ENCODE measurements at regions of chr7 and their contacts with region 1.

Region 1: DNA sequence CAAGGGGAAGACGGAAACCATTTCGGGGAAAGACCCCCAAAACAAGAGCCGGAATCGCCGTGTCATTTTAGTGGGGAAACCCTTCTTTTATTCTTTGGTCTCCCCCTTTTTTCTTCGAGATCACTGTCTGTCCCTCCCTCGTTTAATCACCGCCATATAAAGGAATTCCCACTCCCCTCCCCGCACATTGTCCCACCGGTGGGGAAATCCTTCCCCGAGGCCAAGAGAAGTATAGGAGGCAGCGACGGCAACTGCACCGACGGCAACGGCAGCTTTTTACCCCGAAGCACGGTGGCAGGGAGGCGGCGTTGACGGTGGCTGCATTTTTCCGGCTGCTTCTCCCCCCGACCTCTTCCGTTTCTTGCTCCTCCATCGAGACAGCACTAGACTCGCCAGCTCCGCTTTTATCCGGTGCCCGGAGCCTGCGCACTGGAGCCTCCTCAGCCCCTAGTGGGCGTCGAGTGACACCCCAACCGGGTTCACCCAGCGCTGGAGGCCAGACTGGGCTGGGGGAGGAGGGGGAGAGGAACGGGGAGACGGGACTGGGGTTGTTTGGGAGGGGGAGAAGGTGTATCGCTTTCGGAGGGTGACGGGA is 687 bp upstream of the KMT2E start:
- DNase-seq: peak; percentile 66
- ATAC-seq: peak; percentile 62
- H3K4me3 ChIP-seq: peak overlapping the region; percentile 100
- H3K27ac ChIP-seq: peak overlapping the region; percentile 100
- H3K4me1 ChIP-seq: peaks cover 4% of the 10 kb centered on the region
- H3K27me3 ChIP-seq: no peaks in the 10 kb centered on the region
- CTCF ChIP-seq: peak; percentile 45 to 69 (median 67)
- EP300 ChIP-seq: no peak; a peak in 1 of 4 replicates
- POLR2A ChIP-seq: peak; percentile 85
- RAD21 ChIP-seq: peak; percentile 8; the same call in 1 of the 2 replicates

Region 2: GRCh38 chr7:104943502-104944343 is 69.6 kb before region 1 on chr7:
- CTCF ChIA-PET with region 1: interaction called, 3 read pairs
- POLR2A ChIA-PET with region 1: interaction called, 8 read pairs
- RAD21 ChIA-PET with region 1: interaction called, 9 read pairs
- SMC1A ChIA-PET with region 1: interaction called, 13 read pairs
- in situ Hi-C with region 1: loop called (anchors 5 kb)
- intact Hi-C with region 1: loop called (anchors 1 kb)
- DNase-seq: peak; percentile 83
- ATAC-seq: peak; percentile 75
- H3K4me3 ChIP-seq: peak overlapping the region; percentile 39; the same call in 1 of the 2 replicates
- H3K27ac ChIP-seq: peak overlapping the region; percentile 93
- H3K4me1 ChIP-seq: peaks cover 39% of the 10 kb centered on the region
- H3K27me3 ChIP-seq: no peaks in the 10 kb centered on the region
- CTCF ChIP-seq: no peak
- EP300 ChIP-seq: peak; percentile 90 to 91
- POLR2A ChIP-seq: peak; percentile 55
- RAD21 ChIP-seq: no peak

Region 3: DNA sequence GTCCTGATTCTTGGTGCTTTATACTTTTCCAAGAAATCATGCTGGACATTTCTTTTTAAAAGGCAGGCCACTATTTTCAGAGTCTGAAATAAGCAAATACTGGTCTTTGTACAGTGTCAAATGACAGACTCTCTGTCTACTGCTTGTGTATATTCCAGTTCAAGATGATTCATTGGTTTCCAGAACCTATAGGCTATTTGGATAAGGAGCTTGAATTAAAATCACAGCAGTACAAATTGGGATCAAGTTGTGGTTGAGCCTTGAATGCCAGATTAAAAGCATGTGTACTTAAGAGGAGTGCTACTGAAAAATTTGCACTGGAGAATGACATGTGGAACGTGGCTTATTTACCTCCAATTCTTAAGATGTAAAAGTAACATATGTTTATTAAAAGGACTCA is 11.4 kb after region 1 on chr7:
- CTCF ChIA-PET with region 1: interaction called, 22 read pairs
- POLR2A ChIA-PET with region 1: interaction called, 50 read pairs
- RAD21 ChIA-PET with region 1: interaction called, 52 read pairs
- SMC1A ChIA-PET with region 1: interaction called, 87 read pairs
- in situ Hi-C with region 1: no loop called
- intact Hi-C with region 1: no loop called
- DNase-seq: no peak
- ATAC-seq: peak; percentile 1; the same call in 1 of the 3 replicates
- H3K4me3 ChIP-seq: 0 out of 2 replicates have a peak overlapping the region, but pooled peaks have one; percentile 28
- H3K27ac ChIP-seq: no peak overlapping the region
- H3K4me1 ChIP-seq: peaks cover 28% of the 10 kb centered on the region
- H3K27me3 ChIP-seq: no peaks in the 10 kb centered on the region
- CTCF ChIP-seq: no peak
- EP300 ChIP-seq: no peak
- POLR2A ChIP-seq: no peak
- RAD21 ChIP-seq: no peak

Region 4: DNA sequence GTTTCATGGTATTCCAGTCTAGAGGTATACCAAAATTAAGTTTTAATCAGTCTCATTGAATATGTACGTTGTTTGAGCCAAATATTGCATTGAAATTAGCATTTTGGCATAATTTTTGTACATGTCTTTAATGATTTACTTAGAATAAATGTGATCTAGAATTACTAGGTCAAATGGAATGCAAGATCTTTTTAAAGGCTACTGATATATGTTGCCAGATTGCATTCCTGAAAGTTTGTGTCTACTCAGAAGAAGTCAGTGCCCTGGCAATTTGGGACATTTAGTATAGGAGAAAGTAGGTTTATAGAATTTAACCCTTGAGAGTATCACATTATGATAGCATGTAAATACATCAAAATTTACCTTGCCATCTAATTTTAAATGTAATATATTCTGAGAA is 33.1 kb after region 1 on chr7:
- CTCF ChIA-PET with region 1: interaction called, 10 read pairs
- POLR2A ChIA-PET with region 1: interaction called, 3 read pairs
- RAD21 ChIA-PET with region 1: interaction called, 3 read pairs
- SMC1A ChIA-PET with region 1: interaction called, 13 read pairs
- in situ Hi-C with region 1: no loop called
- intact Hi-C with region 1: no loop called
- DNase-seq: no peak
- ATAC-seq: no peak
- H3K4me3 ChIP-seq: no peak overlapping the region
- H3K27ac ChIP-seq: no peak overlapping the region
- H3K4me1 ChIP-seq: no peaks in the 10 kb centered on the region
- H3K27me3 ChIP-seq: no peaks in the 10 kb centered on the region
- CTCF ChIP-seq: no peak
- EP300 ChIP-seq: no peak
- POLR2A ChIP-seq: no peak
- RAD21 ChIP-seq: no peak

Region 5: DNA sequence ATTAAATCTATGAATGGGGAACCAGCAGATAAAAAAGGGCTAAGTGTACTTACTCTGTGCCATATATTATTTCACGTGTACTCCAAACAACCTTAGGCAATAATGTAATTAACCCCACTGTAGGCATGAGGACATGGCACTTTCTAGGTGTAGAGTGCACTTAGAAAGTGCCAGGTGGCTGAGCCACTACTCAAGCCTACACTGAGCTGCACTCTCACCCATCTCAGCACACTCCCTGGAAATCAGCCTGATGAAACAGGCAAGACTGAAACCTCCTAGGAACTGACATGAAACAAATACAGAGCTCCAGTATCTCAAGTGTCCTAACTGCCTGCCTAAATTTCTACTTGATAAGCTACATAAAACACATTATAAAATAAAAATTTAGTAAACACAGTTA is 148.0 kb after region 1 on chr7:
- CTCF ChIA-PET with region 1: no interaction called
- POLR2A ChIA-PET with region 1: no interaction called
- RAD21 ChIA-PET with region 1: no interaction called
- SMC1A ChIA-PET with region 1: no interaction called
- in situ Hi-C with region 1: no loop called
- intact Hi-C with region 1: no loop called
- DNase-seq: no peak
- ATAC-seq: no peak
- H3K4me3 ChIP-seq: no peak overlapping the region
- H3K27ac ChIP-seq: no peak overlapping the region
- H3K4me1 ChIP-seq: no peaks in the 10 kb centered on the region
- H3K27me3 ChIP-seq: no peaks in the 10 kb centered on the region
- CTCF ChIP-seq: no peak
- EP300 ChIP-seq: no peak
- POLR2A ChIP-seq: no peak
- RAD21 ChIP-seq: no peak

Region 6: DNA sequence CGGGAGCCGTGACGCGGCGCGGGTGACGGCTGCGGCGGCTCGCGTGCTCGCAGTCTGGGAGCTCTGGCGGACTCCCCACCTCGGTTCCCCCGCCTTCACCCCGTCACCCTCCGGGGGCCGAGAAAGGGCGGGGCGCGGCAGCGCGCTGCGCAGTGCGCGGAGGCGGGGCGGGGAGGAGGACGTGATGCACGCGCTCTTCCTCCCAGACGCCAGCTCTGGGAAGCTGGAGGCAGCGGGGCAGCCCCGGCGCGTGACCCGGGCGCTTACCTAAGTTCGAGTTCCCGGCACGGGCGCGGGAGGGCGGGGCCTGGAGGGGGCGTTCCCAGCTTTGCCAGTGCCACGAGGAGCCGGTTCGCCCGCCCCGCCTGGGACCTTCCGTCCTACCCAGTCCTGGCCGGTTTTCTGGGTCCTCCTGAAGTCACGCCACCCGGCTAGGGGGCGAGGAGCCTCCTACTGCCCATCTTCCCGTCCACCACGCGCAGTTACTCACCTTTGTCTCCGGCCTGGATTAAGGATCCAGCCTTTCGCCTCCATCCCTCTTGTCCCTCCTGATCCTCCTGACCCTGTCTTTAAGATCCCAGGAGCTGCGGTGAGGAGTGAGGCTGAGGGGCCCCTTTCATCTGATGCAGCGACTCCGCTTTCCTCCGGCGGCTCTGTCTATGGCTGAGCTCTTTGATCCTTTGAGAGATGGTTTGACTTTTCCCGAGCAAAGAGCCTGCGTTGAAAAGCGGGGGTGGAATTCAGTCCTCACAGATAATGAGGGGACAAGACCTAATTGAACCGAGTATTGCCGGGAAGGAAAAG is 1271.9 kb after region 1 on chr7:
- CTCF ChIA-PET with region 1: no interaction called
- POLR2A ChIA-PET with region 1: interaction called, 3 read pairs
- RAD21 ChIA-PET with region 1: no interaction called
- SMC1A ChIA-PET with region 1: no interaction called
- in situ Hi-C with region 1: loop called (anchors 25 kb)
- intact Hi-C with region 1: loop called (anchors 10 kb)
- DNase-seq: peak; percentile 97
- ATAC-seq: peak; percentile 77
- H3K4me3 ChIP-seq: peak overlapping the region; percentile 99
- H3K27ac ChIP-seq: peak overlapping the region; percentile 100
- H3K4me1 ChIP-seq: peaks cover 3% of the 10 kb centered on the region
- H3K27me3 ChIP-seq: no peaks in the 10 kb centered on the region
- CTCF ChIP-seq: no peak
- EP300 ChIP-seq: peak; percentile 42 to 52; a peak in 2 of 4 replicates
- POLR2A ChIP-seq: peak; percentile 78
- RAD21 ChIP-seq: no peak